Body of pancreas (tissue), 4 donors: ENCODE measurements at regions of chr15 and their contacts with region 1.

Region 1: GRCh38 chr15:101307048-101307896 is 12.2 kb upstream of the SNRPA1 start:
- DNase-seq: peak in 3 of 4 donors; percentile 2 to 6 (median 5)
- ATAC-seq: no peak
- H3K4me3 ChIP-seq: no peak overlapping the region
- H3K27ac ChIP-seq: no peak overlapping the region
- H3K4me1 ChIP-seq: no peaks in the 10 kb centered on the region
- H3K27me3 ChIP-seq: no peaks in the 10 kb centered on the region
- CTCF ChIP-seq: no peak
- POLR2A ChIP-seq: no peak

Region 2: GRCh38 chr15:101578437-101578894 is 271.2 kb after region 1 on chr15:
- intact Hi-C with region 1: loop called (anchors 10 kb)
- DNase-seq: peak; percentile 61 to 72 (median 66)
- ATAC-seq: peak; percentile 82
- H3K4me3 ChIP-seq: no peak overlapping the region
- H3K27ac ChIP-seq: no peak overlapping the region
- H3K4me1 ChIP-seq: no peaks in the 10 kb centered on the region
- H3K27me3 ChIP-seq: no peaks in the 10 kb centered on the region
- CTCF ChIP-seq: peak; percentile 25 to 87 (median 69)
- POLR2A ChIP-seq: no peak

Region 3: DNA sequence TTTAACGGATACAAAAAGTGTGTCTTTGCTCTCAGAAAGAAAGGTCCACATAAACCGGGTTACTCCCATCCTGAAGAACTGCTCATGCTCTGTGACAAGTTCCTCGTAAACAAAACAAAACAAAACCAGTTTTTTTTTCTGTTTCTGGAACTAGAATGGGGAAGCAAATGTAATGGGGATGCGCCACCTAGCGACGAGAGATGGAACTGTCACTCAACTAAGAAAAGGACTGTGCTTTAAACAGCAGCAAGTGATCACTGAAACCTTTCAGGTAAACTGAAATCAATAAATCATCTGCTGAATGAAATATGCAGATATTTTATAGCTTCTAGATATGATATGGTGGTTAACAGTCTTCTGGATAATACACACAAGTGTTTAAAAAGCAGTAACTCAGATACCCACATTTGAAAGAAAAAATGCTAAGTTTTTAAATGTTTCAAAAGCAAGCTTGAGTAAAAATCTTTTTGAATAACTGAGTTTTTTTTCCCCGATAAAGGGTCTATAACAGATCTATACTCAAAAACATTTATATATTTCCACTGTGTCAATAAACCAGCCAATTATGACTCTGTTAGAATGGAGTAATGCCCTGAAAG is 334.0 kb after region 1 on chr15:
- intact Hi-C with region 1: loop called (anchors 5 kb)
- DNase-seq: peak; percentile 63 to 83 (median 75)
- ATAC-seq: peak; percentile 58
- H3K4me3 ChIP-seq: no peak overlapping the region
- H3K27ac ChIP-seq: peak overlapping the region in 1 of 4 donors; percentile 35
- H3K4me1 ChIP-seq: no peaks in the 10 kb centered on the region
- H3K27me3 ChIP-seq: no peaks in the 10 kb centered on the region
- CTCF ChIP-seq: peak; percentile 78 to 92 (median 86)
- POLR2A ChIP-seq: no peak